ENCODE measurements at regions of chr15 and their contacts with region 1.

Region 1: DNA sequence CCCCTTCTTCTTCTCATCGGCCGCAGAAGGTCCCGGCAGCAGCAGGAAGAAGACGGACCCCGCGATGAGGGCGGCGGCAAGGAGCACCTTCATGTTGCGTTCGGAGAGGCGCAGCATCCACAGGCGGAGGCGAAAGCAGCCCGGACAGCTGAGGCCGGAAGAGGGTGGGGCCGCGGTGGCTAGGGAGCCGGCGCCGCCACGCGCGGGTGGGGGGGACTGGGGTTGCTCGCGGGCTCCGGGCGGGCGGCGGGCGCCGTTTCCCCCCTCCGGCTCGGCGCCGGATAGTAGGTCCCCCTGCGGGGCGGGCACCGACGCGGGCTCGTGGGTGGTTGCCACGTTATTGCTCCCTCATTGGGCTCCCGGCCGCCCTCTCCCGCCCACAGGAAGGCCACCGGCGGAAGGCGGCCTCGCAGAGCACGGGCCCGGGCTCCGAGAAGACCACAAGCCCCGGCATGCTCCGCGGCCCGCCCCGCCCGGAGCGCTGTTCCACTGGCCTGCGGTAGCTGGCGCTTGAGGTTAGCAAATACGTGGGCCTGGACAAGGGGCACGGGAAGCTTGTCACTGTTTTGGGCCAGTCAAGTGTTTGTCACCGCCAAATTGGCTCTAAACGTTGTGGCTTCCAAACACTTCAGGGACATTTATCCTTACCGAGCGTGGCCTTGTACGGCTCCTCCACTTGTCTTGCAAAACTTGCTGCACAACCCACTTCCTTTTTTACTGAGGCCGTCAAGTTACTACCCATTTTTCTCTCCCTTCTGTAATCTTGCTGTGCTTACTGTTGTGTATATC is at the start of gene PPIB:
- DNase-seq: peak; percentile 99
- H3K4me3 ChIP-seq: peak within 1 kb of the TSS; percentile 78 to 95 (median 80)
- H3K27ac ChIP-seq: peak within 1 kb of the TSS; percentile 83 to 94 (median 88)
- H3K4me1 ChIP-seq: peaks cover 0 to 51% (median 36%) of the 10 kb centered on the region in 4 donors
- H3K27me3 ChIP-seq: no peaks in the 10 kb centered on the region
- CTCF ChIP-seq: peak in 1 of 4 experiments; percentile 13
- EP300 ChIP-seq: peak in 1 of 4 donors; percentile 22
- POLR2A ChIP-seq: peak; percentile 54 to 67
- total RNA-seq, gene PPIB: 154 to 232 (median 183) TPM

Region 2: DNA sequence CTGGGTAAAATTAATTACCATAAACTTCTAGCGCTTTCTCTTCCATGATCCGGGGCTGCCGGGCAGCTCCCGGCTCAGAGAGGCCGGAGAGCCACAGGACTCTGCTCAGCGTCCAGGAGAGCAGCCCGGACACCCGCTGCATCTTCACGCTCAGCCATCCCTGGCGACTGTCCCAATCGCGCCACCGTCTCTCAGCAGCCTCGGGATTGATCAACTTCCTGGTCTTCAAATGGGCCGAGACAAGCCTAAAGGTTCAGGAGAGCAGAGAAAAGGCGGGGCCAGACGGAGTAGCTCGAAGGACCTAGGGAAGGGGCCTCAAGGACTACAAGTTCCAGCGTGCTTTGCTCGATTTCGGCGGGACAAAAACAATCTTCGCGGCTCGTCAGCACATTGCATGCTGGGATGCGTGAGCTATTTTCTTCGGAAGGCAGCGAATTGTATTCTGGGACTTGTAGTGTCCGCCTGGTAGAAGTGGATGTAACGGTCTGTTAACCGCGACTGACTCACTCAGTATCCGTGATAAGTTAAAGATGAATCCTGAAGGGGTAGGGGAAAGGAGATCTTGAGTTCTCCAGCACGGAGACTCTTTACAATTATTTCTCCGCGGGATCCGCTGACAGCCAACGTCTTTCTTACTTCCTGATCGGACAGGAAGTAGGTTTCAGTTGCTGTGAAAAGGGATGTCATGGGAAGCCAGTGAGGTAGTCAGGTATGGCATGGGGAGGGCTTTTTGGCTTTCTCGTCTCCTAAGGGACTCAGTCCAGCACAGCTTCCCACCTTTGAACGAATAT is 69.2 kb before region 1 on chr15 and contains the start of gene CIAO2A:
- intact Hi-C with region 1: loop called (anchors 2 kb)
- DNase-seq: peak; percentile 98
- H3K4me3 ChIP-seq: peak within 1 kb of the TSS; percentile 60 to 75 (median 68)
- H3K27ac ChIP-seq: peak within 1 kb of the TSS; percentile 87 to 91 (median 90)
- H3K4me1 ChIP-seq: peaks cover 0 to 57% (median 49%) of the 10 kb centered on the region in 4 donors
- H3K27me3 ChIP-seq: no peaks in the 10 kb centered on the region
- CTCF ChIP-seq: no peak
- EP300 ChIP-seq: peak in 1 of 4 donors; percentile 13
- POLR2A ChIP-seq: peak; percentile 45 to 52
- total RNA-seq, gene CIAO2A: 24.7 to 51.7 (median 42.2) TPM

Region 3: GRCh38 chr15:64387562-64388168 is 224.6 kb after region 1 on chr15 and contains the start of gene TRIP4:
- intact Hi-C with region 1: loop called (anchors 1 kb)
- DNase-seq: peak; percentile 97
- H3K4me3 ChIP-seq: peak within 1 kb of the TSS; percentile 52 to 82 (median 68)
- H3K27ac ChIP-seq: peak within 1 kb of the TSS; percentile 70 to 83 (median 80)
- H3K4me1 ChIP-seq: peaks cover 0 to 18% (median 12%) of the 10 kb centered on the region in 4 donors
- H3K27me3 ChIP-seq: no peaks in the 10 kb centered on the region
- CTCF ChIP-seq: no peak
- EP300 ChIP-seq: no peak
- POLR2A ChIP-seq: peak in 1 of 2 donors; percentile 33
- total RNA-seq, gene TRIP4: 11.0 to 26.6 (median 12.2) TPM

Measured in sigmoid colon (tissue), 7 donors.